ENCODE measurements at regions of chr3 and their contacts with region 1.

Region 1: DNA sequence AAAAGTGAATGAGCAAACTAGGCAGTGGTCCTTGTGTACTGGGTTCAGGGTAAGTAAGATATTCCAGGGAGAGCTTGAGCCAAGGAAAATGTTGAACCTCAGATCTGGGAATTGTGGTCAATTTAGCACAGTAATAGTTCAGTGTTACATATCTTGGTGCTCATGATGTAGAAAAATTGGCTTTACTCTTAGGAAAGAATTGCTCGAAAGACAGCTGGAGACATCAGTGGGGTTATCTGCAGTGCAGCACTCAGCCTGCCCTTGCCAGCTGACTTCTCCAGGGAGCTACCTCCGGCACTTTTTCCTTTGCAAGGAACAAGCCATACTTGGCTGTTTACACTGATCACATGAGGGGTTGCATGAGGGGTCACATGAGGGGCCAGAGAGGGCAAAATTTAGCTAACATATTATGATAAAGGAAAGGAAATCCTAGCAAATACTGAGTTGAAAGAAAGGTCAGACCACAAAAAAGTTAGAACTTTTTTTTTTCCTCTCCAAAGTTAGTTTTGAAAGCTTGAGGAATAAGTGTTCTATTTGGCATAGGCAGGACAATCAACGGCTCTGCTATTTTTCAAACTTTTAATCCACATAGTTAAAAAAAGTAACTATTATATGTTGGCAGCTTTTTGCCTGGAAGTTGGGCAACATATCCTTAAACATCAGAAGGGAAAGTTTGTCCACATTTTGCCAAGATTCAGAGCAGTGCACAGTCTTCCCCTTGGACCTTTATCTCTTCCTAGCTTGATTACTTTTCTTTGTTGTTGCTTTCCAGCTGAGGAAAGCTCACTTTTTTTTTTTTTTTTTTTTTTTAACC is 92.4 kb downstream of the COL6A6 start:
- DNase-seq: no peak
- ATAC-seq: no peak
- H3K4me3 ChIP-seq: no peak overlapping the region
- H3K27ac ChIP-seq: no peak overlapping the region
- H3K4me1 ChIP-seq: no peaks in the 10 kb centered on the region
- H3K27me3 ChIP-seq: no peaks in the 10 kb centered on the region
- CTCF ChIP-seq: no peak

Region 2: DNA sequence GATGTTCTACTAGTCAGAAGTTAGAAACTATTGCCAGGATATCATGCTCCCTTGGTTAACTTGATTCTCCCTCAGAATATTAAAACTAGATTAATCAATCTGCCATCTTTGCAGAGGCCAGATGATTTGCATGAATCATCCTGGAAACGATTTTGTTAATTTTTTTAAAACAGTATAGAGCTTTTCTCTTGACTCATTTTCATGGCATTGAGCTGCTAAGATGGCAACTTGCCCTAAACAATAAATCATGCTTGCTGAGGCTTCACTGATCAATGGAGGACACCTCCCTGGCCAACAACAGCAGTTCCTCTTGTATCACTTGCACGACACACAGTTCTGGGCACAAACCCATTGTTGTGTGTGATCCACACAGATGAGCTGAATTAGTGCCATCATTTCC is 16.7 kb after region 1 on chr3:
- CTCF ChIA-PET with region 1: interaction called, 11 read pairs
- POLR2A ChIA-PET with region 1: interaction called, 14 read pairs
- in situ Hi-C with region 1: no loop called
- intact Hi-C with region 1: no loop called
- DNase-seq: no peak
- ATAC-seq: no peak
- H3K4me3 ChIP-seq: no peak overlapping the region
- H3K27ac ChIP-seq: no peak overlapping the region
- H3K4me1 ChIP-seq: no peaks in the 10 kb centered on the region
- H3K27me3 ChIP-seq: peaks cover 7% of the 10 kb centered on the region; the same call in 1 of the 2 replicates
- CTCF ChIP-seq: no peak

Measured in Panc1 (cell line).